Endothelial cell of umbilical vein (primary cell): ENCODE measurements at regions of chr17 and their contacts with region 1.

Region 1: GRCh38 chr17:18141210-18141803 is 32.8 kb downstream of the MYO15A start:
- DNase-seq: peak; percentile 68
- H3K4me3 ChIP-seq: no peak overlapping the region
- H3K27ac ChIP-seq: no peak overlapping the region
- H3K4me1 ChIP-seq: peaks cover 4% of the 10 kb centered on the region
- H3K27me3 ChIP-seq: no peaks in the 10 kb centered on the region
- CTCF ChIP-seq: peak; percentile 38 to 42
- POLR2A ChIP-seq: no peak

Region 2: DNA sequence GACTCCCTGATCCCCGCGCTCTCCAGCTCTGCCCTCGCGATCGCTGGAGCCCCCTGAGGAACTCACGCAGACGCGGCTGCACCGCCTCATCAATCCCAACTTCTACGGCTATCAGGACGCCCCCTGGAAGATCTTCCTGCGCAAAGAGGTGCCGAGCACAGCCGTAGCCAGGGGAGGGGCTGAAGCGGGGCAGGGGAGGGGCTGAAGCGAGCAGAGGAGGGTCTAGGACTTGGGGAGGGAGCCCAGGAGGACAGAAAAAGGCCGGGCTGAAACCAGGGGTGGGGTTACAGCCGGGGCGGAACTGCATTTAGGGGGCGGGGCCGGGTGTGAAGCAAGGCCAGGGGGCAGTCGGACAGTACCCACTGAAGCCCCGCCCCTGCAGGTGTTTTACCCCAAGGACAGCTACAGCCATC is 12.4 kb after region 1 on chr17:
- CTCF ChIA-PET with region 1: interaction called, 37 read pairs
- POLR2A ChIA-PET with region 1: no interaction called
- dilution Hi-C with region 1: no loop called
- intact Hi-C with region 1: no loop called
- DNase-seq: peak; percentile 82
- H3K4me3 ChIP-seq: peak overlapping the region in 2 of 3 experiments; percentile 33 to 34
- H3K27ac ChIP-seq: no peak overlapping the region
- H3K4me1 ChIP-seq: peaks cover 9% of the 10 kb centered on the region
- H3K27me3 ChIP-seq: no peaks in the 10 kb centered on the region
- CTCF ChIP-seq: no peak
- POLR2A ChIP-seq: no peak

Region 3: DNA sequence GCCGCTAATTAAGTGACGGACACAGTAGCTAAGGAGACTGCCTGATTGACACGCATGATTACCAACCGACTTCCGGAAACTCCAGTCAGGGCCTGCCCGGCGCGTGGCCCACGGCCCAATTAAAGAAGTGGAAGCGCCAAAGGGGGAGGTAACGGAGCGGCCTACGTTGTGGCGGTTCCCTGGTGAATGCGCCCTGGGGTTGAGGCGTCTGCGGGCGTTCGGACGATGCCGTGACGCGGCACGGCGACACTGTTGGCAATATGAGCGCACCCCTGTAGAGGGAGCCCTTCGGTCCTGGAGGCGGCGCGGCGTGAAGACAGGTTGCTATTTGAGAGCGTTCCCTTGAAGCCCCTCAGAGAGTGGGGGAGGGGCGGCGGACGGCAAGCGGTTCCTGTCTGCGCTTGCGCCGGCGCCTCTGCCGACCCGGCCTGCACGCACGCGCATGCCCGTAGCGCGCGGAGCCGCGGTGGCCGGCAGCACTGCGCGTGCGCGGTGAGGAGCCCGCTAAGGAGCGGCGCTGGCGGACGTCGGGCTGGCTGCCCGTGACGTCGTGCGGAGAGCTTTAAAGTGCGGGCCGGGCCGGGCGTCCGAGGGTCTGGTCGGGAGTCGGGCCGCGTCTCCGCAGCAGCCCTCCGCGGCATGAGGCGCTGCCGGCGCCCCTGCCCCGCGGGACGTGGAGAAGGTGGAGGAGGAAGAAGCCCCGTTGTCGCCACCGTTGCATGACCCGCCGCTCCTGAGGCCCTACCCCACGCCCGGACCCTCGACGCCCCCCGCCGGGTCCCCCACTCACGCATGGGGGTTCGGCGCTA is 42.2 kb after region 1 on chr17 and contains the start of gene ALKBH5:
- CTCF ChIA-PET with region 1: interaction called, 16 read pairs
- POLR2A ChIA-PET with region 1: no interaction called
- dilution Hi-C with region 1: no loop called
- intact Hi-C with region 1: loop called (anchors 1 kb)
- DNase-seq: peak; percentile 99
- H3K4me3 ChIP-seq: peak within 1 kb of the TSS; percentile 79 to 94 (median 80)
- H3K27ac ChIP-seq: peak within 1 kb of the TSS; percentile 86
- H3K4me1 ChIP-seq: peaks cover 44% of the 10 kb centered on the region
- H3K27me3 ChIP-seq: no peaks in the 10 kb centered on the region
- CTCF ChIP-seq: peak; percentile 25 to 30
- POLR2A ChIP-seq: peak; percentile 23
- total RNA-seq, gene ALKBH5: 70.7 and 71.0 TPM in 2 replicates

Region 4: GRCh38 chr17:18191236-18191667 is 49.9 kb after region 1 on chr17:
- CTCF ChIA-PET with region 1: interaction called, 12 read pairs
- POLR2A ChIA-PET with region 1: no interaction called
- dilution Hi-C with region 1: no loop called
- intact Hi-C with region 1: no loop called
- DNase-seq: peak; percentile 77
- H3K4me3 ChIP-seq: no peak overlapping the region
- H3K27ac ChIP-seq: peak overlapping the region; percentile 6
- H3K4me1 ChIP-seq: peaks cover 50% of the 10 kb centered on the region
- H3K27me3 ChIP-seq: no peaks in the 10 kb centered on the region
- CTCF ChIP-seq: no peak
- POLR2A ChIP-seq: no peak

Region 5: DNA sequence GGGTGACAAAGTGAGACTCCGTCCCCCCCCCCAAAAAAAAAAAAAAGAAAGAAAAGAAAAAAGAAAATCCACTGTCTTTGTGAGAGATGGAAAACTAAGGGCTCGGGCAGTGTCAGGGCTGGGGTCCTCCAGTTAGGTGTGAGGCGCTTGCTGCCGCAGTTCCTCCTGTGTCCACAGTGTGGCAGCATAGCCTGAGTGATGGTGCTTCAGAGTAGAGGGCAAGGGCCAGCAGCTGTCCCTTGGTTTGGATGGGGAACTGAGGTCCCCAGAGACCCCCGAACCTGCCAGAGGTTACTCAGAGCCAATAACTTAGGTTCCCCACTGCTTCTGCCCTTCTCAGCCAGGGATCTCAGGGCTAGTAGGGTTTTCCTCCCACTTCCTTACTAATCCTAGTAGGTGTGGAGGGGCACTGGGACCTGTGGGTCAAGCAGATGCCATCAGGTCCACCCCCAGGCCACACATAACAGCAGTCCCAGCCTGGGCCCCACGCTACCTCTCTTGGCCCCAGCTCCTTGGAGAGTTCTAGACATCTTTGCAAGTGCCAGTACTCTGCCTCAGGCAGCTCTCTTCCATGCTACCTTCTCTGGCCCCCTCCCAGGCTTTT is 76.2 kb after region 1 on chr17:
- CTCF ChIA-PET with region 1: interaction called, 12 read pairs
- POLR2A ChIA-PET with region 1: no interaction called
- dilution Hi-C with region 1: no loop called
- intact Hi-C with region 1: loop called (anchors 5 kb)
- DNase-seq: peak; percentile 63
- H3K4me3 ChIP-seq: no peak overlapping the region
- H3K27ac ChIP-seq: no peak overlapping the region
- H3K4me1 ChIP-seq: peaks cover 7% of the 10 kb centered on the region
- H3K27me3 ChIP-seq: no peaks in the 10 kb centered on the region
- CTCF ChIP-seq: peak; percentile 82 to 95
- POLR2A ChIP-seq: no peak